Cardiac septum (tissue), 1 donor: ENCODE measurements at regions of chr3 and their contacts with region 1.

Region 1: GRCh38 chr3:73056014-73056844 is 5.2 kb upstream of the EBLN2 start:
- DNase-seq: no peak

Region 2: DNA sequence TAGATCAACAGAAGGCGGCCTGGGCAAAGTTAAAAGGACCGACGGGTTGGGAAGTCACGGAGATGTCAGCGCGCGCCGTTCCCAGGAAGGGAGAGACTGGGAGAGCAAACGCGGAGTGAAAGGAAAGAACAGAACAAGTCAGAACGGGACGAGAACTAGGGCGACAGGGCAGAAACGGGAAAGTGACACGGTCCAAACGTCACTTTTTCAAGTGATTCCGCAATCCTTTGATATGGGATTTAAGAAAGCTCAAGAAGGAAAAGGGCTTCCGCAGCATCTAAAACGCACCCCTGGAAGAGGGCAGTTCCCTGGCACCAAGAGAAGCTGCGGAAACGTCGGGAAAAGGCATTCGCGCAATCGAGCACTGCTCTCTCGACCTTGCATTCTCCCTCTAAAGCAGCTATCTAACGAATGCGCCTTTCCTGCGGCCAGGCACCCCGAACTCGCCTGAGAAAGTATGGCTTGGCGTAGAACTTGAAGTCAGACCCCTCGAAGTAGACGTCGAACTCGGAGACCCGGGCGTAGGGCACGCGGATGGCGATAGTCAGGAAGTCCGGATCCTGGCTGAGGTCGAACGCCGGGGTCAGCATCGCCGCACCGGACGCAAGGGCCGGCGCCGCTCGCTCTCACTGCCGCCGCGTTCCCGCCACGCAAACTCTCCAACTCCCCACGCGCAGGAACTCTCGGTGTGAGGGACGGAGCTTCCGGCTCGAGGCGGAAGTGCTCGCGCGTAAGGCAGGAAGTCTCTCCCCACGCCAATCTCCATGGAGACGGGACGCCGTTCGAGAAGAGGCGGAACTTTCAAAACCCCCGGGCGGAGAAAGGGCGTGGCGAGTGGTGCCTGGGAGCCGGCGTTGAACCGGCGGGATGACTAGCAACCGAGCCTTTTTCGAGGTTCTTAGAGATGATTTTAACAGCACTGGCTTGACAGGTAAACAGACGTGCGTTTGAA is 208.2 kb before region 1 on chr3 and contains the start of gene SHQ1:
- intact Hi-C with region 1: loop called (anchors 10 kb)
- DNase-seq: peak; percentile 97
- total RNA-seq, gene SHQ1: 11.1 TPM